Heart left ventricle (tissue), 16 donors: ENCODE measurements at regions of chr10 and their contacts with region 1.

Region 1: DNA sequence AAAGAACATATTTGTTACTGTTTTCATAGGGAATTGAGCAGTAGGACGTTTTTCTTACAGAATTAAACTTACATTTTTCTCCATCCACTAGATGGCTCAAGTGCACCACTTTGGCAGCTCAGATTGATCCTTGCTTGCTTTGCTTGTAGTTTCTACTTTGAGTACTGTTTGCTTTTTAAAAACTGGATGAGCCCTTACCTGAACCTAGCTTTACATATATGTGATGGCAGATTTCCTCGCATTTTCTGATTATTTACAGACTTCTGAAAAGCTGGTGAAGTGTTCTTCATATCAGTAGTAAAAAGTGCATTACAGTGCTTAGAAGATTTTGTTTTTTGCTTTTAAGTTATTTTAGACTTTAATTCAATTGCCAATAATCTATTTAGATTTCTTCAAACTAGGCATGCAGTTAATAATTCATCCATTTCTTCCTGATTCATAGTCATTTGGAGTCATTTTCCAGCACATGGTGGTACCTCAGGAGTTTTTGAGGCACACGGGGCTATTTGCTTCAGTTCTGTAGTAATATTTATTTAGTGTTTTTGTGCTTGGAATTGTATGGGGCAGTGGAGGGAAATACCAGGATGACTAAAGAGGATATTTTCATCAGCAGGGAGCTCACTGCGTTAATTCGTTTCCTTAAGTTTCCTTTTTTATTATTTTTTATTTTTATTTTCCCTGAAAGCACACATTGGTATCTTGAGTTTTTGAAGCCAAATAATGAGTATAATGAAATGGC is 57.3 kb downstream of the MAPK8 start:
- DNase-seq: peak in 3 of 5 donors; percentile 24 to 28 (median 25)
- ATAC-seq: peak in 3 of 4 donors; percentile 66 to 81 (median 80)
- H3K4me3 ChIP-seq: no peak overlapping the region
- H3K27ac ChIP-seq: peak overlapping the region in 4 of 12 donors; percentile 2 to 51 (median 50)
- H3K4me1 ChIP-seq: peaks cover 4 to 55% (median 37%) of the 10 kb centered on the region in 12 donors
- H3K27me3 ChIP-seq: no peaks in the 10 kb centered on the region
- CTCF ChIP-seq: peak; percentile 51 to 84 (median 73)
- POLR2A ChIP-seq: no peak

Region 2: DNA sequence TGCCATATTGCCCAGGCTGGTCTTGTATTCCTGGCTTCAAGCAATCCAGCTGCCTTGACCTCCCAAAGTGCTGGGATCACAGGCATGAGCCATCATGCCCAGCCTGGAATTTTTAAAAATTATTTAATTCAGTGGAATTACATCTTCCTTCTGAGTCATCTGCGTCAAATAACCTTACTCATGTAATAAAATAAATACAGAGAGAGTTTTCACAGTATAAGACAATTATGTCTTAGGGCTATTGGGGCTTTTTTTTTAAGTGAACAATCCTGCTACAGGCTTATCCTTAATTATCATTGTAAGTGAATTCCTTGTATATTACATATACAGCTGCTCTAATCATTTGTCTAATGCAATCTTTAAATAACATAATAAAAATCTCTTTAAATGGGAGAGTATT is 51.0 kb after region 1 on chr10:
- intact Hi-C with region 1: loop called in 1 of 10 experiments (anchors 10 kb)
- DNase-seq: no peak
- ATAC-seq: no peak
- H3K4me3 ChIP-seq: no peak overlapping the region
- H3K27ac ChIP-seq: peak overlapping the region in 1 of 12 donors; percentile 22
- H3K4me1 ChIP-seq: peaks cover 0 to 3% (median 0%) of the 10 kb centered on the region in 12 donors
- H3K27me3 ChIP-seq: no peaks in the 10 kb centered on the region
- CTCF ChIP-seq: no peak
- POLR2A ChIP-seq: no peak

Region 3: GRCh38 chr10:48551861-48552591 is 188.2 kb after region 1 on chr10:
- intact Hi-C with region 1: loop called in 2 of 10 experiments (anchors 1 to 5 kb)
- DNase-seq: peak in 4 of 5 donors; percentile 37 to 49 (median 43)
- ATAC-seq: peak; percentile 38 to 72 (median 60)
- H3K4me3 ChIP-seq: no peak overlapping the region
- H3K27ac ChIP-seq: no peak overlapping the region
- H3K4me1 ChIP-seq: peaks cover 0 to 24% (median 10%) of the 10 kb centered on the region in 12 donors
- H3K27me3 ChIP-seq: no peaks in the 10 kb centered on the region
- CTCF ChIP-seq: peak; percentile 61 to 84 (median 72)
- POLR2A ChIP-seq: no peak

Region 4: DNA sequence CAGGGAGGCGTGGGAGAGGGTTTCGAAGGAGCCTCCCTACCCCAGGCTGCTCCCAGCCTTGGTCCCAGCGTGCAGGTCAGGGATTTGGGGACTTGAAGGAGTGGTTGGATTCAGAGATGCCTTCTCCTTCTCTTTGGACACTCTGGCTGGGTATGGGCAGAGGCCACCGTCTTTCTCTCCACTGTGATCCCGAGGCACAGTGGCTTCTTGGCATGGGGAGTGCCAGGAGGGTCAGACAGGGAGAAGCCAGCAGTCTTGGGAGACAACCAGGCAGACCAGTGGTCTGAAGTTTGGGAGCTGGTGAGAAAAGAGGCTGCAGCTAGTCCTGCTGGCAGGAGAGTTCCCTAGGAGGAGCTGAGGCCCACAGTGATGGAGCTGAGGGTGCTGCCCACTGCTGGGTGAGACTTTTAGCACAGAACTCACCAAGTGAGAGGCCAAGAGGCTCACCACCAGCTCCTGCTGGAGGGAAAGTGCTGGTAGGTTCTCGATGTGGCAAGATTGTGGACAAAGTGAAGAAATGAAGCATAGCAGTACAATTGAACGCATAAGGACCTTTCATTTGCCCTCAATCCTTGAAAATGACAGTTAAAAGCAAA is 285.7 kb after region 1 on chr10:
- intact Hi-C with region 1: loop called in 1 of 10 experiments (anchors 5 kb)
- DNase-seq: no peak
- ATAC-seq: peak in 1 of 4 donors; percentile 43
- H3K4me3 ChIP-seq: no peak overlapping the region
- H3K27ac ChIP-seq: no peak overlapping the region
- H3K4me1 ChIP-seq: peaks cover 0 to 17% (median 0%) of the 10 kb centered on the region in 12 donors
- H3K27me3 ChIP-seq: no peaks in the 10 kb centered on the region
- CTCF ChIP-seq: peak in 2 of 12 donors; percentile 7 to 14
- POLR2A ChIP-seq: no peak